Activated CD4-positive, alpha-beta memory T cell treated with anti-CD3 and anti-CD28 coated beads for 36 hours (primary cell): ENCODE measurements at regions of chr2 and their contacts with region 1.

Region 1: GRCh38 chr2:69946351-69947077 is 14.9 kb downstream of the ASPRV1 start:
- DNase-seq: peak; percentile 80
- H3K4me3 Mint-ChIP-seq: no peak overlapping the region
- H3K27ac Mint-ChIP-seq: peak overlapping the region; percentile 85
- H3K4me1 Mint-ChIP-seq: peaks cover 36% of the 10 kb centered on the region
- H3K27me3 Mint-ChIP-seq: no peaks in the 10 kb centered on the region

Region 2: DNA sequence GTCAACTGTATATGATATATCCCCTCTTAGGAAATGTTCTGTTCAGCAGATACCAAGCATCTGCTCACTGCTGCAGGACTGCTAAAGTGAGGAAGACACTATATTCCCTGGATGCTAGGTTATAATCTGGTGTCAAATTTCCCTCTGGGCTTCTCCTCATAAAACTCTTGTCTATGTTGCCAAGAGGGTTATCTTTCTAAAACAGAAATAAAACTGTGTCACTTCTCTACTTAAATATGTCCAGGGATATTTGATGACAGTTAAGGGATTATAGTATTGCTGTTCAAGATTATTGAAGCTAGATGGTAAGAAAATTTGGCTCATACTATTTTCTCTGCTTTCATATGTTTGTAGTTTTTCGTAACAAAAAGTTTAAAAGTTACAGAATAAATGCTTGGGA is 83.2 kb before region 1 on chr2:
- CTCF ChIA-PET with region 1: no interaction called
- POLR2A ChIA-PET with region 1: no interaction called
- intact Hi-C with region 1: no loop called
- DNase-seq: no peak
- H3K4me3 Mint-ChIP-seq: no peak overlapping the region
- H3K27ac Mint-ChIP-seq: no peak overlapping the region
- H3K4me1 Mint-ChIP-seq: no peaks in the 10 kb centered on the region
- H3K27me3 Mint-ChIP-seq: no peaks in the 10 kb centered on the region

Region 3: DNA sequence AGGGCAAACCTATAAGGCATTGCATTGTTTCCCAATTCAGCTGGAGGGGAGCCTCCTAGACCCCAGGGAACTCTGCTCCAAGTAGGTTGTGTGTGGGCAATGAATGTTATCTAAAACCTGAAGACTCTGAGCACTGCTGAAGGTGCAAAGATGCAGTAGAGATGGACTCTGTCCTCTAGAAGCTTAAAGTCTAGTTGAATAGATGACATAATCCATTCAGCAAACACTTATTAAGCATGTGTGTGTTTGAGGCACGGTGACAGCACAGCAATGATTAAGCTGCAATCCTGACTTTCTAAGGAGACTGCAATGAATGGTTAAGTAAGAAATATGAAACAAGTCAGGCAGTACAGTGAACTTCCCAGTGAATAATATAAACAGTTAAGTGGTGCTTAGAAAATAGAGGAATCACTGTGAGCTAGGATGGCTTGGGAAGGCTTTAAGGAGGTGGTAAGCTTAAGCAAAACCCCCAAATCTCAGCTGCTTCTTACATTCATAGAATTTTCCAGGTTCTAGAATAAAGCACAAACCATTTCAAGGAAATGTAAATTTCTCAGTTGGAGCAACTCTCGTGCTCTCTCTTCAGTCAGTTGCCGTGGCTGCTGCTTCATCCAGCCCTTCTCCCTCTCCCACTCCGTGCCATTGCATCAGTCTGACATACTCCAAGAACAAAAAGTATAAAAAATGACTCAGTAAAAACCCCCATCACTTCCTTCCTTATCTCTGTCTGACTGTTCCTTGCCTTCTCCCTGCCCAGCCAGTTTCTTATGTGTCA is 12.5 kb before region 1 on chr2:
- CTCF ChIA-PET with region 1: interaction called, 3 read pairs
- POLR2A ChIA-PET with region 1: interaction called, 5 read pairs
- intact Hi-C with region 1: loop called (anchors 1 kb)
- DNase-seq: peak; percentile 63
- H3K4me3 Mint-ChIP-seq: no peak overlapping the region
- H3K27ac Mint-ChIP-seq: peak overlapping the region; percentile 73
- H3K4me1 Mint-ChIP-seq: peaks cover 37% of the 10 kb centered on the region
- H3K27me3 Mint-ChIP-seq: no peaks in the 10 kb centered on the region